Right ventricle myocardium superior (tissue), 1 donor: ENCODE measurements at regions of chr15 and their contacts with region 1.

Region 1: GRCh38 chr15:73771380-73772045 is 18.4 kb upstream of the INSYN1 start:
- DNase-seq: no peak
- ATAC-seq: no peak

Region 2: GRCh38 chr15:73573572-73573971 is 197.9 kb before region 1 on chr15:
- intact Hi-C with region 1: no loop called
- DNase-seq: no peak
- ATAC-seq: peak; percentile 5

Region 3: GRCh38 chr15:73717802-73718201 is 53.7 kb before region 1 on chr15:
- intact Hi-C with region 1: loop called (anchors 10 kb)
- DNase-seq: no peak
- ATAC-seq: no peak

Region 4: GRCh38 chr15:75095594-75095993 is 1324.1 kb after region 1 on chr15:
- intact Hi-C with region 1: no loop called
- DNase-seq: no peak
- ATAC-seq: no peak